ENCODE measurements at regions of chr10 and their contacts with region 1.

Region 1: DNA sequence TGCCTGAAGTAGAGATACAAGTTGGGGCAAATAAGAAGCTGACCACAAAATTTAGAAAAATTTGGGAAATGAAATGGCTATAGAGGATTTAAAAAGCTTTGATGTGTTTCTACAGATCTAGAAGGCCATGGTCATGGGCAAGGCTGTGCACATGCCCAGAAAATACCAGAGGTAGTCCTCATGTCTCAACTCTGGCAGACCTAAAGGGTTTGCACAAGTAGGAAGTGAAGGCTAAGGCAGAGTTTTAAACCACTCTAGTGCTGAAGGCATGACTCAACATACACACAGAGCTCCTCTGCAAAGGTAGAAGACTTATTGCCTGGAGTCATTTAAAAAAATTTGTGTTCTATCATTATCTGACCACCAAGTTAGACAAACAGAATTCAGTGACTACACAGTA is 364.6 kb downstream of the CCSER2 start:
- DNase-seq: no peak
- ATAC-seq: no peak

Region 2: GRCh38 chr10:84876116-84876999 is 183.4 kb after region 1 on chr10:
- intact Hi-C with region 1: no loop called
- DNase-seq: no peak
- ATAC-seq: no peak

Region 3: GRCh38 chr10:84903320-84903719 is 210.3 kb after region 1 on chr10:
- intact Hi-C with region 1: no loop called
- DNase-seq: no peak
- ATAC-seq: peak; percentile 72

Region 4: DNA sequence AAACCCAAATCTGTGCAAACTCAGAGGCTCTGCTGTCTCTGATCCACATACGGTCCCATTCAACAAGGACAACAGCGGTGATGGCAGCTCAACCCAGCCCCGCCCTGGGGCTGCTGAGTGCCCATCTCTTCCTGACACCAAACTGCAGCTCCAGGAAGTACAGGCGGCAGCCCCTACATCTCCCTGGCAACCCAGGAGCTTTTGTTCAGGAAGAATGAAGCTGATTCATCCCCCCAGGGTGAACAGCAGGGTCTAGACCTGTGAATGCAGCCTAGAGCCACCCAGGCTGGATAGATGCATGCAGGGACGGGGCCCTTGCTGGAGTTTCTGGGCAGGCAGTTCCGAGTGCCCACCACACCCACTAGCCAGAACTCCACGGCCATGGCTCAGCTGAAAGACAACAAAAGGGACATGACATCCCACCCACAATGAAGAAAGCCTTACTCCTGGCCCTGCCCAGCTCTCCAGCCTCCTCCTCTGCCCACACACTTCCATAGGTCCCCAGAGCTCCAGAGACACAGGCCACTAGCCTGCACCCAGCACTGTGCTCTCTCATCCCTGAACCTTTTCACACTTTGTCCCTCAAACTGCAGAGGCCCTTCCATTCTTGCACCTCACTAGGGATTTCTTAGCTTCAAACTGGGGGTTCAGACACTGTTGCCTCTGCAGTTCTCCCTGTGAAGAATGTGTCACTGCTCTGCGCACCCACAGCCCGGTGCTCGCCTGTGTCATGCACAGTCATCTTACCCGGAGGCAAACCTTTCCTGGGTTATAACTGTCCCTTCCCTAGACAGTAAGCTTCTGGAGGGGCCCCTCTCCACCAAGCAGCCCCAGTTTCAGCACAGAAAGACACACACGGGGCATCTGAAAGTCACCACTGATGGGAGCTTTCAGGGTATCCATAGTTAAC is 1574.5 kb after region 1 on chr10:
- intact Hi-C with region 1: loop called (anchors 5 kb)
- DNase-seq: peak; percentile 28
- ATAC-seq: no peak

Measured in sciatic nerve (tissue), 2 donors.